ENCODE measurements at regions of chr15 and their contacts with region 1.

Region 1: DNA sequence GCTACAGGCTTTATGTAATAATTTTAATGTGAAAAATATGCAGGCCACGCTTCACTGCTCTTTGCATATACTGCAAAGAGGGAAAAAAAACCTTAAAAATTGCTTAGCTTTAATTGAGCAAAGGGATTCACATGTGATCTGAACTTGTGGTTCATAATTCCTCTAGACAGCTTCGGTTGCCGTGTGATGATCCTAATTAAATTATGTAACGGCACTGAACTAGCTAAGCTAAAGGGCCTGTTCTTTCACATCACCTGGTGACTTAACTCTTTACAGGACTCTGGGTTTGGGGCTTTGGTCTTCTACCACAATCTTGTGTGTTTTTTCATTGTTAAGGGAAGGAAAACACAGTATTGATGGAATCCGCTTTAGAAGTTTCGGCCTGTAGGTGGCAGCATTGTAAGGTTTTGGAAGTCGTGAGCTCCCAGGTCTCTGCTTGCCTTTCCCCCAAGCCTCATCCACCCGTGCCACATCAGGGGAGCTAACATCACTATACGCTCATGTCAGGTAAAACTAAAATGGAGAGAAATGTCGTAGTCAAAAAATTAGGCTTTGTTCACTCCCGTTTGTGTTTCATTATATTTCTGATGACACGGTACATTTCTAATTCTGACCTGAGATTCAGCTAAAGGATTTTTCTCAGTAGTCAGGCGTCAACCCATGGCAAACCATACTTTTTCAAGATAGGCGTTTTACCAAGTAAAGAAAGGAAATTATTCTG is 205.6 kb upstream of the DPH6 start:
- DNase-seq: peak; percentile 68
- ATAC-seq: peak; percentile 96
- H3K4me3 ChIP-seq: no peak overlapping the region
- H3K27ac ChIP-seq: no peak overlapping the region
- H3K4me1 ChIP-seq: peaks cover 0 to 13% of the 10 kb centered on the region in 2 experiments; a peak in 2 of 4 replicates
- H3K27me3 ChIP-seq: no peaks in the 10 kb centered on the region
- CTCF ChIP-seq: peak; percentile 15 to 85 (median 73); a peak in 5 of 6 replicates
- POLR2A ChIP-seq: no peak
- RAD21 ChIP-seq: peak; percentile 69

Region 2: GRCh38 chr15:35674873-35675781 is 76.4 kb before region 1 on chr15:
- CTCF ChIA-PET with region 1: no interaction called
- POLR2A ChIA-PET with region 1: no interaction called
- RAD21 ChIA-PET with region 1: no interaction called
- intact Hi-C with region 1: no loop called
- DNase-seq: no peak
- ATAC-seq: no peak
- H3K4me3 ChIP-seq: no peak overlapping the region
- H3K27ac ChIP-seq: no peak overlapping the region
- H3K4me1 ChIP-seq: no peaks in the 10 kb centered on the region
- H3K27me3 ChIP-seq: no peaks in the 10 kb centered on the region
- CTCF ChIP-seq: no peak
- POLR2A ChIP-seq: no peak
- RAD21 ChIP-seq: no peak

Region 3: GRCh38 chr15:35740761-35741160 is 10.8 kb before region 1 on chr15:
- CTCF ChIA-PET with region 1: interaction called, 34 read pairs
- POLR2A ChIA-PET with region 1: no interaction called
- RAD21 ChIA-PET with region 1: interaction called, 3 read pairs
- intact Hi-C with region 1: no loop called
- DNase-seq: no peak
- ATAC-seq: no peak
- H3K4me3 ChIP-seq: no peak overlapping the region
- H3K27ac ChIP-seq: no peak overlapping the region
- H3K4me1 ChIP-seq: peaks cover 16 to 20% of the 10 kb centered on the region in 2 experiments
- H3K27me3 ChIP-seq: no peaks in the 10 kb centered on the region
- CTCF ChIP-seq: no peak
- POLR2A ChIP-seq: no peak
- RAD21 ChIP-seq: no peak

Region 4: DNA sequence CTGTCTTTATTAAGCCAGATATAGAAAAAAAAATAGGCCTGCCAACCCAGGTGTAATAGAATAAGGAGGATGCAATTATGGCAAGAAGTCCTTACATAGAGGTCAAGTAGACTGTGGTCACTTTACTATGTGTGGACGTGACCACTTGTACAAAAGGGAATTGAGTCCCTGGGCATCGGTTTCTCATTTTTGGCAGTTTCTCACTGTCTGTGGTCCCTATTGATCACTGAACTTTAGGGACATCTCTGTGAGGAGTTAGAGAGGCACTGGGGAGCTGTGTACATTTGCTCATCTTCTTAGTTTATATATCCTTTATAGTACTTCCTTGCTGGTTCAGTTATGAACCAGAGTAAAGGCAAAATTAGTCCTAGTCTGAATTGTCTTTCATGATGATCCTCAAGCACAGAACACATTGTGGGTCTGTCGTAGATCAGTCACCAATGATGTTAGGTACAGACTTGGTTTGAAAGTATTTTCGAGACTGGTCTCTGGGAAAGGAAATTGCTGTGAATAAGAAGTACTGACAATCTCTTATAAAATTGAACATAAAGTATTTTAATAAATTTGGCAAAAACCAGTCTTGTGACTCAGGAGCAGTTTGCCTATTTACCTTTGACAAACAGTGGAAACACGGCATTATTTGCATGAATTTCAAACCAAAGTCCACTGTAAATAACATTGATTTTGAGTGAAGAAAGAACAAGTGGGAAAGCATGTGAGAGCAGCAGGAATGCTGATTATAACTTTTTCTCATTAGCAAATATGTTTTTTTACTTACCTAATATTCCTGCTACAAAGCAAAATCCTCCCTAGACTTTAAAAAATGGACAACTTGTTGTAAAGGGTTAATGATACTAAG is 13.3 kb after region 1 on chr15:
- CTCF ChIA-PET with region 1: interaction called, 21 read pairs
- POLR2A ChIA-PET with region 1: no interaction called
- RAD21 ChIA-PET with region 1: no interaction called
- intact Hi-C with region 1: no loop called
- DNase-seq: no peak
- ATAC-seq: no peak
- H3K4me3 ChIP-seq: no peak overlapping the region
- H3K27ac ChIP-seq: no peak overlapping the region
- H3K4me1 ChIP-seq: no peaks in the 10 kb centered on the region
- H3K27me3 ChIP-seq: no peaks in the 10 kb centered on the region
- CTCF ChIP-seq: no peak
- POLR2A ChIP-seq: no peak
- RAD21 ChIP-seq: no peak

Region 5: GRCh38 chr15:36501063-36501678 is 749.6 kb after region 1 on chr15:
- CTCF ChIA-PET with region 1: interaction called, 12 read pairs
- POLR2A ChIA-PET with region 1: no interaction called
- RAD21 ChIA-PET with region 1: no interaction called
- intact Hi-C with region 1: loop called (anchors 10 kb)
- DNase-seq: peak; percentile 69
- ATAC-seq: peak; percentile 100
- H3K4me3 ChIP-seq: no peak overlapping the region
- H3K27ac ChIP-seq: peak overlapping the region; percentile 30; the same call in 1 of the 2 replicates
- H3K4me1 ChIP-seq: peaks cover 6 to 11% of the 10 kb centered on the region in 2 experiments; a peak in 3 of 4 replicates
- H3K27me3 ChIP-seq: no peaks in the 10 kb centered on the region
- CTCF ChIP-seq: peak; percentile 44 to 85 (median 83); a peak in 5 of 6 replicates
- POLR2A ChIP-seq: no peak
- RAD21 ChIP-seq: peak; percentile 84

Region 6: GRCh38 chr15:36883713-36884517 is 1132.3 kb after region 1 on chr15:
- CTCF ChIA-PET with region 1: no interaction called
- POLR2A ChIA-PET with region 1: no interaction called
- RAD21 ChIA-PET with region 1: no interaction called
- intact Hi-C with region 1: loop called (anchors 10 kb)
- DNase-seq: peak; percentile 63
- ATAC-seq: peak; percentile 99
- H3K4me3 ChIP-seq: no peak overlapping the region
- H3K27ac ChIP-seq: no peak overlapping the region
- H3K4me1 ChIP-seq: no peaks in the 10 kb centered on the region
- H3K27me3 ChIP-seq: no peaks in the 10 kb centered on the region
- CTCF ChIP-seq: peak; percentile 57 to 85 (median 85); a peak in 5 of 6 replicates
- POLR2A ChIP-seq: no peak
- RAD21 ChIP-seq: peak; percentile 82

Region 7: DNA sequence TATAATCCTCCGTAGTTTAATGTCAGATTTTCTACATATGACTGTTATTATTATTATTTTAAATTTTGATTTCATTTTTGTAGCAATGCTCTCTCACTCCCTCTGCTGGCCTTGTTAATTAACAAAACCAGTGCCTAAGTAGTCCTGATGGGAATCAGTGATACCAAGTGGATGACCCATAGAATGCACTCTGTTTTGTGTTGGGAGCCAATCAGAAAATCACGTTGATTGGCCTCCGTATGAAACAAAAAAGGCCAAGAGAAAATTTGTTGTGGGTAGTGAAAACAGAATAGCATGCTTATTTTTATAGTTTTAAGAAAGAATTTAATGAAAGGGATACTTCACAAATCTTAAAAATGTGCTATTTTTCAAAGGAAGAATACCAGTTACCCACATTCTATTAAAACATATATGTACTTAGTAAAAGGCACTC is 1383.1 kb after region 1 on chr15:
- CTCF ChIA-PET with region 1: interaction called, 4 read pairs
- POLR2A ChIA-PET with region 1: no interaction called
- RAD21 ChIA-PET with region 1: no interaction called
- intact Hi-C with region 1: loop called (anchors 10 kb)
- DNase-seq: peak; percentile 54
- ATAC-seq: peak; percentile 91
- H3K4me3 ChIP-seq: no peak overlapping the region
- H3K27ac ChIP-seq: no peak overlapping the region
- H3K4me1 ChIP-seq: no peaks in the 10 kb centered on the region
- H3K27me3 ChIP-seq: no peaks in the 10 kb centered on the region
- CTCF ChIP-seq: peak; percentile 59 to 63 (median 61); a peak in 5 of 6 replicates
- POLR2A ChIP-seq: no peak
- RAD21 ChIP-seq: peak; percentile 35; the same call in 1 of the 2 replicates